HEK293T (cell line): ENCODE measurements at regions of chr5 and their contacts with region 1.

Region 1: DNA sequence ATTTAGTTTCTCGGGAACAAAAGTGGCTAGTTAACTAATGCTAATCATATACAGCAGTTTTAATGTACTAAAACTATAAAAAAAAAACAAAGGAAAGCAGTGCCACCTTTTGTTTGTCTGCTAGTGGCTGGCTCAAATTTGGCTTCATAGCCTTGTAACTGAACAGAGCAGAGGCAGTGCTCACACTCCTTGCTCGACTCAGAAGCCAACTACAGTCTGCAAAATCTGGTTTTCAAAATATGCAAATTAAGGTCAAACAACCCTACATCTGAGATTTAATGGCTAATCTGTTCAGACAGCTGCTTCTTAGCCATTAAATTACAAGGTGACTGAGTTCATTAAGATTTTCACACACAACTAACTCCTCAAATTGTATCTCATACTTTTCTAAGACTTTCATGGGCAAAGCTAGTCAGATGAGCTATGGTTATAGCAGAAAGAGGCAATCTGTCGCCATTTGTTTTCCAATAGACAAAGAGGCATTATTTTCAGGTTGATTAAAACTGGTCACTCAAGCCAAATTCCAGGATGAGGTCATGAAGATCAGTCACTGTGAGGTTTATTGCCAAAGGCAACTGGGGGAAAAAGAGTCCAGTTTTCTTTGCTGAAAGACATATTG is 56.8 kb upstream of the EPB41L4A start:
- DNase-seq: no peak

Region 2: DNA sequence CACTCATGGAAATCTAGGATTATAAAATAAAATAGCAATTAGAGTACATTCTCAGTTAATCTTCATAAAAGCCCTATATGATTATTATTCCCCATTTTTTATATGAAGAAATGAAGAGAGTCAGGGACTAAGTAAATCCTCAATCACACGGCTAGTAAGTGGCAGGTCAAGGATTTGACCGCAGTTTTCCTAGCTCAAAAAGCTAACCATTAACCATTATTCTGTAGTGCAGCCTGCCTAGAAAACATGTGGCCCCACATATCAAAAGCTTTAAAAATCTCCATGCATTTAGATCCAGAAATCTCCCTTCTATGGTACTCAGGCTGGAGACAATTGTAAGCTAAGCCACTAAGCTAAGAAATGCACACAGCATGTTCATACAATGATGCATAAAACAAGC is 78.2 kb before region 1 on chr5:
- CTCF ChIA-PET with region 1: no interaction called
- POLR2A ChIA-PET with region 1: no interaction called
- DNase-seq: no peak

Region 3: GRCh38 chr5:112492291-112492690 is 16.4 kb after region 1 on chr5:
- CTCF ChIA-PET with region 1: interaction called, 12 read pairs
- POLR2A ChIA-PET with region 1: no interaction called
- DNase-seq: peak; percentile 77